ENCODE measurements at regions of chr15 and their contacts with region 1.

Region 1: DNA sequence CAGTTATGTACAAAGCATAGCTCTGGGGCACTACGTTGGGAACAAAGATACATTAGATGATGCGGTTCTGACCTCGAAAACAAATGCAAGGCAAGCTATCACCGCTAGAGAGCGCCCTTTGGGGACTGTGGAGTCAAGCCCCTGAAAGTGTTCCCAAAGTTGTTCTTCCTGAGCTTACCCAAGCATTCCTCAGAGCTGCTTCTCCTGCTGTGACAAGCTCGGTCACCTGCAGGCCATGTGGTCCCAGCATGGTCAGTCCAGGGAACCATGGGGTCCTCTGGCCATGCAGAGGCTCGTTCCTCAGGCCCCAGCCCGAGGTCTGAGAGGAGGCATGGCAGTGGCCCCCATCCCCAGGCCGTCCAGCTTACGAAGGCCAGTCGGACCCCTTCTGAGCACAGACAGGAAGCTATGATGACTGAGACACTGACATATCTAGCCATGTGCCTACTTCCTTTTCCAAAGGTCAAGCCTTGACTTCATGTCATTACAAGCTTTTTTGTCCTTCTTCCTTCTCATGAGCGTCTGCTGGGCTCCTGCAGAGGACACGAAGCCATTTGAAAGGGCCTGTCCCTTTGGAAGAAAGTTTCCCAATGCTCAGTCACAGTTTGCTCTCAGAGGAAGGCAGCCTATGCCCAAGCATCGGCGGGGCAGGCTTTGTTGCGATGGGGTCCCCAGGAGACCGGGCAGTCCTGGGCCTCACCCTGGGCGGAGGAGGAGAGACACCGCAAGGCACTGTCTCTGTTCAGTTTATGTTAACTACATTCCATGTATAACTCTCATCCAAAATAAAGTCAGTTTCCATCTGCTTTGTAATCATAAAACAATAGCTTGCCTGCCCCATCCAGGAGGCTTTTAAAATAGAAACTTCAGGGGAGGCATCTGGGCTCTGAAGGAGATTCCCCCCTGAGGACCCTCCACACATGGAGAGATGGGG is 79.3 kb downstream of the ATP10A start:
- DNase-seq: peak; percentile 86
- ATAC-seq: peak; percentile 80
- H3K4me3 Mint-ChIP-seq: no peak overlapping the region
- H3K27ac Mint-ChIP-seq: no peak overlapping the region
- H3K4me1 Mint-ChIP-seq: peaks cover 20% of the 10 kb centered on the region
- H3K27me3 Mint-ChIP-seq: no peaks in the 10 kb centered on the region
- CTCF ChIP-seq: peak; percentile 69

Region 2: DNA sequence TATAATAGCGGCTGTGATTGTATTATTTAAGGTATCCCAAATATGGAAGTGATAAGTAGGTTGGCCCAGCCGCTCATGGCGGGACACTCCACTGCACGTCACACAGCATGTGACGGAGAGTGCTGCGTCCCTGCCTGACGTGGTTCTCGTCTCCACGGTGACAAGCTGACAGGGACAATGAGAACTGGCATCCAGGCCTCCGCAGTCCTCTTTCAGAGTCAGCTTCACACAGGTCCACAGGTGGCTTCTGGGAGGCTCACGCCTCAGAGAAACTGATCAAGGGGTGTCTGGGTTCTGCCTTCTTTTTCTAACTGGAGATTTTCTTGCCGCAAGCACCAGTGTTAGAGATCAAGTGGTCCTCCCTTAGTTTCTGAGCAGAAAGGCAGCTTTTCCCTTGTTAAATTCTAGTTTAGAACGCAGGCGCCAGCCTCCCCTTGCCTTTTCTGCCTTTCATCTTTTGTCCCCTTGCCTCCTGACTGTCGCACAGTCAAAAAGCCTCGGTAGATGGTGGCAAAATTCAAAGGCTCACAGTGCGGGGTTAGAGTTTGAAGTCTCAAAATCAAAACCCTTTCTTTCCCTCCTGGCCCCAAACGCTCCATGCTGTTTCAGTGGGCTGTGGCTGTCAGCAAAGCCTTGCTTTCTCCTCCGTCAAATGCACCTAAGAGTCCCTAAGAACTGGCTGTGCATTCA is 41.7 kb before region 1 on chr15:
- CTCF ChIA-PET with region 1: interaction called, 10 read pairs
- POLR2A ChIA-PET with region 1: no interaction called
- DNase-seq: no peak
- ATAC-seq: no peak
- H3K4me3 Mint-ChIP-seq: no peak overlapping the region
- H3K27ac Mint-ChIP-seq: no peak overlapping the region
- H3K4me1 Mint-ChIP-seq: no peaks in the 10 kb centered on the region
- H3K27me3 Mint-ChIP-seq: no peaks in the 10 kb centered on the region
- CTCF ChIP-seq: no peak

Region 3: GRCh38 chr15:25795061-25795460 is 11.2 kb after region 1 on chr15:
- CTCF ChIA-PET with region 1: interaction called, 12 read pairs
- POLR2A ChIA-PET with region 1: no interaction called
- DNase-seq: no peak
- ATAC-seq: no peak
- H3K4me3 Mint-ChIP-seq: no peak overlapping the region
- H3K27ac Mint-ChIP-seq: no peak overlapping the region
- H3K4me1 Mint-ChIP-seq: peaks cover 56% of the 10 kb centered on the region
- H3K27me3 Mint-ChIP-seq: no peaks in the 10 kb centered on the region; the same call in 1 of the 2 replicates
- CTCF ChIP-seq: no peak

Region 4: GRCh38 chr15:25849151-25849921 is 65.5 kb after region 1 on chr15:
- CTCF ChIA-PET with region 1: interaction called, 15 read pairs
- POLR2A ChIA-PET with region 1: no interaction called
- DNase-seq: no peak
- ATAC-seq: peak; percentile 7; the same call in 1 of the 2 replicates
- H3K4me3 Mint-ChIP-seq: peak overlapping the region; percentile 77
- H3K27ac Mint-ChIP-seq: no peak overlapping the region
- H3K4me1 Mint-ChIP-seq: peaks cover 58% of the 10 kb centered on the region
- H3K27me3 Mint-ChIP-seq: no peaks in the 10 kb centered on the region; the same call in 1 of the 2 replicates
- CTCF ChIP-seq: no peak

Region 5: DNA sequence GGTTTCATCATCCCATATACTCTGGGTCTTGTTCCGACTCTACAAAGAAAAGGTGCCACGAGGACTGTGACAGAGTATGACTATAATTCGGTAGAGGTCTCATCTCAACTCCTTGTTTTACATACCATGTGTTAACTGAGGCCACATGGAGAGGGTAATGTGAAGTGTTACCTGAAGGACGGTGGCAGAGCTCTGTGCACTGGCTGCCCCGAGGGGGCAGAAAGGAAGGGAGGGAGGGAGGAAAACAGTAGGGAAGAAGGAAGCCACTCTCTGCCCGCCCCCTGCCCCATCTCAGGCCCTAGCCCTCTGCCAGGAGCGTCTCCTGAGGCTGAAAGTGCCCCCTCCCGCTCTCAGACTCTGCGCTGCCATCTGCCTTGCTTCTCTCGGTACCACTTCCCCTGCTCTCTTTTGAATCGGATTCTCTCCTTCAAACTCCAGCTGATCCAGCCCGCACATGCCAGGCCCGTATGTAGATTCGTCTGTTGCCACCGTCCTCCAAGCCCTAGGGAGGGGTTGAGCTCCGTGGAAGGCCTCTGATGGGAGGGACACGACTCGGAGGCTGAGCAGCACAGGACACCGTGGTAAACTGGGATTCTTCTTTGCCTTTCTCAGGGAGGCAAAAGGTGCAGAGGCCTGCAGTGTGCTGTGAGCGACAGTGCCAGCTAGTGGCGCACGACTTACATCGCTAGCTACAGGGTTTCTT is 149.7 kb after region 1 on chr15:
- CTCF ChIA-PET with region 1: interaction called, 72 read pairs
- POLR2A ChIA-PET with region 1: no interaction called
- DNase-seq: peak; percentile 73
- ATAC-seq: peak; percentile 95
- H3K4me3 Mint-ChIP-seq: peak overlapping the region; percentile 71
- H3K27ac Mint-ChIP-seq: no peak overlapping the region
- H3K4me1 Mint-ChIP-seq: peaks cover 12% of the 10 kb centered on the region
- H3K27me3 Mint-ChIP-seq: no peaks in the 10 kb centered on the region
- CTCF ChIP-seq: peak; percentile 36; the same call in 1 of the 2 replicates

Region 6: DNA sequence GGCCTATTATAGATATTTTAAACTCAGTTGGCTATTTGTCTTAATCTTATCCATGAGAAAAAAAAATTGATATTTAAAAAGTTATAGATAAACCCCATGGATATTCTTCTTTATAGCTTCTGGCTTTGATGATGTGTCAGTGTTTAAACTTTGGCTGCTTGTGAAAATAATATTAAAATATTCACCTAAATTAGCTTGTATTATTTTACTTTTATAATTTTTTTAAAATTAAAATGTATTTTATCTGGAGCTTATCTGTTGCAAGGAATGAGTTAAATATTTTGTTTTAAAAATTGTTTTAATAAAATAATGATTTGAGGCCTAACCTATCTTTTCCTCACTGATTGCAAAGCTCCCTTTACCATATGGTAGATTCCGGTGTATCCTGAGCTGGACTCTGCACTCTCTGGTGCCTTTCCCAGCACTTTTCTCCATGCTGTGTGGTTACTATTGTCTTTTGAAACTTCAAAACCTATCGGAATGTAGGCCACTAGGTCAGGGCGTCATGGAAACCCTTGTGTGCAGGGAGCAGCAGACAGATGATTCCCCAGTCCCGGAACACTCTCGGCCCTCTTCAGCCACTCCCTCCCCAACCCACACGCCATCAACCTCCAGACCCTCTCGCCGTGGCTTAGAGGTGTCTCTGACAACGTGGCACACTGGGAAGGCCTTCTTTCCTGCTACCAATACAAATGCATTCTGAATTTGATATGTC is 331.5 kb after region 1 on chr15:
- CTCF ChIA-PET with region 1: no interaction called
- POLR2A ChIA-PET with region 1: no interaction called
- DNase-seq: no peak
- ATAC-seq: no peak
- H3K4me3 Mint-ChIP-seq: no peak overlapping the region
- H3K27ac Mint-ChIP-seq: no peak overlapping the region
- H3K4me1 Mint-ChIP-seq: peaks cover 12% of the 10 kb centered on the region; the same call in 1 of the 2 replicates
- H3K27me3 Mint-ChIP-seq: no peaks in the 10 kb centered on the region; the same call in 1 of the 2 replicates
- CTCF ChIP-seq: no peak

Measured in WTC11 (cell line).